Vagina (tissue), 2 donors: ENCODE measurements at regions of chr1 and their contacts with region 1.

Region 1: GRCh38 chr1:170978371-170978910 is 43.1 kb downstream of the MROH9 start:
- DNase-seq: no peak
- H3K4me3 ChIP-seq: no peak overlapping the region
- H3K27ac ChIP-seq: no peak overlapping the region
- H3K4me1 ChIP-seq: no peaks in the 10 kb centered on the region
- H3K27me3 ChIP-seq: no peaks in the 10 kb centered on the region
- CTCF ChIP-seq: no peak
- POLR2A ChIP-seq: no peak

Region 2: GRCh38 chr1:170634293-170634692 is 344.1 kb before region 1 on chr1:
- intact Hi-C with region 1: no loop called
- DNase-seq: no peak
- H3K4me3 ChIP-seq: no peak overlapping the region
- H3K27ac ChIP-seq: no peak overlapping the region
- H3K4me1 ChIP-seq: no peaks in the 10 kb centered on the region
- H3K27me3 ChIP-seq: no peaks in the 10 kb centered on the region
- CTCF ChIP-seq: no peak
- POLR2A ChIP-seq: no peak

Region 3: GRCh38 chr1:170698301-170699275 is 279.9 kb before region 1 on chr1:
- intact Hi-C with region 1: no loop called
- DNase-seq: no peak
- H3K4me3 ChIP-seq: peak overlapping the region in 1 of 2 donors; percentile 18
- H3K27ac ChIP-seq: peak overlapping the region; percentile 64
- H3K4me1 ChIP-seq: peaks cover 94% of the 10 kb centered on the region
- H3K27me3 ChIP-seq: no peaks in the 10 kb centered on the region
- CTCF ChIP-seq: no peak
- POLR2A ChIP-seq: no peak

Region 4: DNA sequence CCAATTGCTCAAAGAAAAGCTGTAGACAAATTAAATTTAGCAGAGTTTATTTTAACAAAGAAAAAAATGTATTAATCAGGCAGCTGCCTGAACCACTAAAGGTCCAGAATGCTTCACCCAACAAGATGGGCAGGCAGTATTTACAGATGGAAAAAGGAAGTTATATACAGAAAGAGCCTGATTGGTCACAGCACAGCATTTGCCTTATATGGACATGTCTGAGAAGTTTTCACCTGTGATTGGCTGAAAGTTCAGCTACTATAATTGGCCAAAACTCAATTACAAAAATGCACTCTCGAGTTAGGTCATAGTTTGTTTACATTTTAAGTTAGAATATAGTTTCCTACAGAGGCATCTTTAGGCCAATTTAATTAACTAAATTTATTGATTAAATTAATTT is 254.7 kb after region 1 on chr1:
- intact Hi-C with region 1: loop called (anchors 10 kb)
- DNase-seq: no peak
- H3K4me3 ChIP-seq: no peak overlapping the region
- H3K27ac ChIP-seq: no peak overlapping the region
- H3K4me1 ChIP-seq: no peaks in the 10 kb centered on the region
- H3K27me3 ChIP-seq: no peaks in the 10 kb centered on the region
- CTCF ChIP-seq: no peak
- POLR2A ChIP-seq: no peak